Right ventricle myocardium superior (tissue), 1 donor: ENCODE measurements at regions of chr6 and their contacts with region 1.

Region 1: GRCh38 chr6:152863618-152864326 is 113.2 kb downstream of the VIP start:
- DNase-seq: no peak
- ATAC-seq: peak; percentile 87

Region 2: DNA sequence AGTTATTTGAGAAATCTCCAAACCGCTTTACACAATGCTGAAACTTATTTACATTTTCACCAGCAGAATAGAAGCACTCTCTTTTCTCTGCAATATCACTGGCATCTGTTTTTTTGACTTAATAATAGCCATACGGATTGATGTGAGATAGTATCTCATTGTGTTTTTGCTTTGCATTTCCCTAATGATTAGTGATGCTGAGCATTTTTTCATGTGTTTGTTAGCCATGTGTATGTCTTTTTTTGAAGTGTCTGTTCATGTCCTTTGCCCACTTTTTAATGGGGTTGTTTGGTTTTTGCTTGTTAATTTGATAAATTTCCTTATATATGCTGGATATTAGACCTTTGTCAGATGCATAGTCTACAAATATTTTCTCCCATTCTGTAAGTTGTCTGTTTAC is 45.5 kb after region 1 on chr6:
- intact Hi-C with region 1: no loop called
- DNase-seq: no peak
- ATAC-seq: no peak

Region 3: GRCh38 chr6:153002607-153003365 is 139.0 kb after region 1 on chr6 and contains the start of gene MTRF1L:
- intact Hi-C with region 1: no loop called
- DNase-seq: peak; percentile 96
- ATAC-seq: peak; percentile 99
- total RNA-seq, gene MTRF1L: 28.2 TPM

Region 4: DNA sequence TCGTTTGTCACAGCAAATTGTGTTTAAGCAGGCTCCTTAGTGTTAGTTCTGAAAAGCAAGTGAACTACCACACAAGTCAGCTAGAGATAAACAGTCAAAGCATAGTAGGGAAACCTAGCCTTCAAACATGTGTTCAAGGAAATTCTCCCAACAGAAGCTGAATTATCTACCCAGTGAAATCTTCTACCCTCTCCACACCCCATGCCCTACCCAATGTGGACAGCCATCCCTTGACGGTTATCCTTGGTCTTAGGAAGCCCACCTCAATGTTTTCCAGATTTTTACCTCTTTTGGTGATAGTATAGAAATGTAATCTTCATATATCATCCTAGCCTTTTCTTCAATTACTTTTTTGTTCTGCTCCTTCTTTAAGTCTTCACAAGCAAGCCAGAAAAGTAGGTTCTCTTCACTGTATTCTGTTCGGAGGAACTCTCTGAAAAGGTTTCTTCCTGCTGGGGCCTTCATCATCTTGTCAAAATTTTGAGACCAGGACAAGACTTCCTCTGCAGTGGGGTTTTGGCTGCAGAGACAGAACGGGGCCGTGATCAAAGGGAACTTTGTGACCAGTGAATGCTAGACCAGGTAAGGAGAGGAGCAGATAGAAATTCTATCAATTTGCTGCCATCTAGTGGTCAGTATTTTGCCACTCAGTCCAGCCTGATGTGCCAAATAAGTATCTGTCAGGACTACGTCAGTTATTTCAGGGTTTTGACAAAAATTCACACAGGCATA is 160.4 kb after region 1 on chr6:
- intact Hi-C with region 1: loop called (anchors 10 kb)
- DNase-seq: no peak
- ATAC-seq: peak; percentile 87